Activated CD4-positive, alpha-beta memory T cell treated with anti-CD3 and anti-CD28 coated beads for 36 hours (primary cell): ENCODE measurements at regions of chr3 and their contacts with region 1.

Region 1: GRCh38 chr3:188914552-188914951 is 257.2 kb upstream of the TPRG1 start:
- DNase-seq: peak; percentile 23
- H3K4me3 Mint-ChIP-seq: no peak overlapping the region
- H3K27ac Mint-ChIP-seq: peak overlapping the region; percentile 86
- H3K4me1 Mint-ChIP-seq: peaks cover 43% of the 10 kb centered on the region
- H3K27me3 Mint-ChIP-seq: no peaks in the 10 kb centered on the region

Region 2: GRCh38 chr3:187974871-187975271 is 939.7 kb before region 1 on chr3:
- CTCF ChIA-PET with region 1: no interaction called
- POLR2A ChIA-PET with region 1: no interaction called
- intact Hi-C with region 1: loop called (anchors 2 kb)
- DNase-seq: no peak
- H3K4me3 Mint-ChIP-seq: peak overlapping the region; percentile 62
- H3K27ac Mint-ChIP-seq: peak overlapping the region; percentile 92
- H3K4me1 Mint-ChIP-seq: peaks cover 63% of the 10 kb centered on the region
- H3K27me3 Mint-ChIP-seq: no peaks in the 10 kb centered on the region

Region 3: DNA sequence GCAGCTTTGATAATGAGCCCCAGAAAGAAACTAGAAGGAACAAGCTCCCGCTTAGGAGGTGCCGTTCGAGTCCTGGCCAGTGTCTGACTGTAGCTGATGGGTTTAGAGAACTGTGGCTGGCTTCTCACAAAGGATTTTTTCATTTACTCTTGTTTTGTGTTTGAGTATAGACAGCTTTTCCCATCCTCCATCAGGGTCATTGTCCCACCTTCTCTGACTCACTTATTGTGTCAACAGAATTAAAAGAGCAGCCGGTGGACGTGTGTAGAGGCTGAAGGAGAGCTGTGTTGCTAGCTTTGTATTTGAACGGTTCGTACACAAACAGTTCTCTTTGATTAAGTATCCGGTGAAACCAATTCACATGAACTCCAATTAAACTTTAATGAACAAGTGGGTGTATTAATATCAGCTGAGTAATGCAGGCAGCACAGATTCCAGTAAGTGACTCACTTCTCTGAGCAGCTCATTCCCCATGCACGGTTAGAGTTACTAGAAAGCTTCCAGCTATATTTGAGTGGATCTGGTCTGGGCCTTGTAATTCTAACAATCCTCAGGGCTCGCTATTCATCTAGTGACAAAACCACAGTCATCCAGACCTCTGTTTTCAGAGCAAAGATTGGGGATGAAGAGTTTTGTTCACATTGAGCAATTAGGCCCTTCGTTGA is 619.6 kb before region 1 on chr3:
- CTCF ChIA-PET with region 1: no interaction called
- POLR2A ChIA-PET with region 1: interaction called, 3 read pairs
- intact Hi-C with region 1: loop called (anchors 2 kb)
- DNase-seq: no peak
- H3K4me3 Mint-ChIP-seq: no peak overlapping the region
- H3K27ac Mint-ChIP-seq: peak overlapping the region; percentile 72
- H3K4me1 Mint-ChIP-seq: peaks cover 79% of the 10 kb centered on the region
- H3K27me3 Mint-ChIP-seq: no peaks in the 10 kb centered on the region

Region 4: DNA sequence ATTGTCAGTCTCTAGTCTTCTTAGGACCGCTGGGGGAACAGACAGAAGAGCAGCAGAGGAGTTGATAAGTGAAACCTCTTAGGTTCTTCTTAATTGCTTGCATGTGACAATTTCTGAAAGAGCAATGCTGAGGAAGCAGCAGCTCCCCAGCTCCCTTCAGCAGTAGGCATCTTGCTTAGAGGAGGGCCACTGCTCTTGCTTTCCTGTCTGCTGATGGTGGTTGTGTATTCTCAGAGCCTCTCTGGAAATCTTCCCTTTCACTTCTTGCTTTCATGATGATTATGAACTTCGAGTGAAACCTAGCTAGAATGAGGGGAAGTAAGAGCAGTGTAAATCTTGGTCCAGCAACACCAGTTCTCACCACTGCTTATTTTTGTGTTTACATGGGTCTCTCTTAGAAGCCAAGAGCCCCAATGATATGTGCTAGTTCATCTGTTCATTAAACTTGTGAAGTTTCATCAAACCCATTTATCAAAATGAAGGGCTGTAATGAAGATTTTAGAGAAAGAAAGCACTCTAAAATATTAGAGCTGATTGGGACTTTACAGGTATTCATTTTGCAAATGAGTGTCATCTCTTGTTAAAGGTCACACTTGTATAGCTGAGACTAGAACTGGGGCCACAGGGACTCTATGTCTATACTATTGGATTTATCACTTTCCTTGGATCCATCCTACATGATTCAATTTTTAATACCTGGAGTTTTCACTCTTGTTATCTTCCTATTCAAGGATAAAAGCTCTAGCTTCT is 513.9 kb before region 1 on chr3:
- CTCF ChIA-PET with region 1: no interaction called
- POLR2A ChIA-PET with region 1: no interaction called
- intact Hi-C with region 1: loop called (anchors 1 kb)
- DNase-seq: peak; percentile 48
- H3K4me3 Mint-ChIP-seq: no peak overlapping the region
- H3K27ac Mint-ChIP-seq: peak overlapping the region; percentile 4
- H3K4me1 Mint-ChIP-seq: peaks cover 68% of the 10 kb centered on the region
- H3K27me3 Mint-ChIP-seq: no peaks in the 10 kb centered on the region

Region 5: DNA sequence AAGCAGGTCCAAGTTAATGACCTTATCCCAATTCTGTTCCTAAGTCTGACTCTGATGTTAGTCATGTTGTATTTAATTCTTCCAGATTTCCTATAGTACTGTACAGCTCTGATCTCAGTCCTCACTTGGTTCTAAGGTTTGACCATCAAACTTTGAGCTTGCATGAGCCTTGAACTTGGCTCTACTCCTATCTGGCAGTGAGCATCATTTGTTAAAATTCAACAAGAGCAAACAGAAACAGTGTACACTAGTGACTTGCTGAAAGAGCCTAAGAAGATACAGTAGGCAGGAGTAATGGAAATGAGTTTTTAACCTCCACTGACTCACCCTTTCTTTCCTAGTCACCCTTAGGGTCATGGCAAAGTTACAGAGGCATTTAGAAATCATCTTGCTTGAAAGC is 193.9 kb before region 1 on chr3:
- CTCF ChIA-PET with region 1: no interaction called
- POLR2A ChIA-PET with region 1: no interaction called
- intact Hi-C with region 1: loop called (anchors 1 kb)
- DNase-seq: no peak
- H3K4me3 Mint-ChIP-seq: no peak overlapping the region
- H3K27ac Mint-ChIP-seq: no peak overlapping the region
- H3K4me1 Mint-ChIP-seq: peaks cover 39% of the 10 kb centered on the region
- H3K27me3 Mint-ChIP-seq: peaks cover 12% of the 10 kb centered on the region

Region 6: DNA sequence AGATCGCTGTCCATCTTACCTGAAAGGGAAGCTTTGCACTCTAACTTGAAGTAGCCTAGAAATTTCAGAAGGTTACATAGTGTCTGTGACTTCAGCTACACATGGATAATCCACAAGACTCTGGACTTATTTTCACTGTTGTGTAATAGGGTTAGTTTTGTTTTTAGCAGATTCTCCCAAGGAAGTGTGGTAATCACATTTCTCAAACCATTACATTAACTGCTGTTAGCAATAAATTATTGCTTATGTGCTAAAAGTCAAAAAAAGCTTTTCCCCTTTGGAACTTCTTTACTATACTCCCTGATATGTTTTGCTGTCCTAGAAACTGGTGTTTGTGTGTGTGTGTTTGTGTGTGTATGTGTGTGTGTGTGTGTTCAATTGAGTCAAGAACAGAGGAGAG is 94.6 kb before region 1 on chr3:
- CTCF ChIA-PET with region 1: no interaction called
- POLR2A ChIA-PET with region 1: no interaction called
- intact Hi-C with region 1: no loop called
- DNase-seq: no peak
- H3K4me3 Mint-ChIP-seq: no peak overlapping the region
- H3K27ac Mint-ChIP-seq: no peak overlapping the region
- H3K4me1 Mint-ChIP-seq: peaks cover under 1% of the 10 kb centered on the region
- H3K27me3 Mint-ChIP-seq: no peaks in the 10 kb centered on the region

Region 7: DNA sequence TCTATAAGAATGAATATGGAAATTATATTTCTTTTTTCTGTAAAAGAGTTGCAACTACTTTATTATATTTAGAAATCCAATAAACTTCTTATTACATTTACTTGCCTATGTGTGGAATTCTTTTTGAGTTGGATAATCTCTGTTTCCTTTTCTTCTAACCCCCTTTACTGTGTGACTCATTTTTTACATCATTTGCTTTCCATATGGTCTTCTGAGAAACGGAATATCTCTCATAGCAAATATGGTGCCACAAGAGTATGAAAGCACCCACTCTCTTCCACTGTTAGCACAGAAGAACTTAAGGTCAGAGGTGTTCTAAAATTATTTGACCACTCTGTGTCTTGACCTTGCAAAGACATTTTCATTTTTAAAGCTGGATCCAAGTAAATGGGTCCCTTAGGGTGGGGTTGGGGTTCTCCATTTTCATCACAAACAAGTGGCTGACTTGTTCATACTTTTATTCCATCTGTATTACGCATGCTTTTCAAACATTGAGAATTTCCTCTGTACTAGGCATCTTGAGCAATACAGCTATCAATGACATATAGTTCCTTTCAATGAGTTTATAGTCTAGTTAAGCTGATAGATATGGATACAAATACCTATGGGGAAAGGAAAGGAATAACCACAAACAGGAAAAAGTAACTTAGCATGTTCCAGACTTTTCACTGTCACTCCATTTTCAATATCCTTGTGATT is 23.8 kb before region 1 on chr3:
- CTCF ChIA-PET with region 1: no interaction called
- POLR2A ChIA-PET with region 1: no interaction called
- intact Hi-C with region 1: no loop called
- DNase-seq: no peak
- H3K4me3 Mint-ChIP-seq: no peak overlapping the region
- H3K27ac Mint-ChIP-seq: no peak overlapping the region
- H3K4me1 Mint-ChIP-seq: peaks cover 4% of the 10 kb centered on the region
- H3K27me3 Mint-ChIP-seq: no peaks in the 10 kb centered on the region

Region 8: GRCh38 chr3:188954590-188955208 is 40.1 kb after region 1 on chr3:
- CTCF ChIA-PET with region 1: interaction called, 19 read pairs
- POLR2A ChIA-PET with region 1: interaction called, 5 read pairs
- intact Hi-C with region 1: loop called (anchors 2 kb)
- DNase-seq: peak; percentile 85
- H3K4me3 Mint-ChIP-seq: no peak overlapping the region
- H3K27ac Mint-ChIP-seq: no peak overlapping the region
- H3K4me1 Mint-ChIP-seq: peaks cover 28% of the 10 kb centered on the region
- H3K27me3 Mint-ChIP-seq: peaks cover 4% of the 10 kb centered on the region

Region 9: GRCh38 chr3:190585805-190586630 is 1671.5 kb after region 1 on chr3:
- CTCF ChIA-PET with region 1: no interaction called
- POLR2A ChIA-PET with region 1: no interaction called
- intact Hi-C with region 1: loop called (anchors 10 kb)
- DNase-seq: peak; percentile 83
- H3K4me3 Mint-ChIP-seq: peak overlapping the region; percentile 64
- H3K27ac Mint-ChIP-seq: peak overlapping the region; percentile 95
- H3K4me1 Mint-ChIP-seq: peaks cover 27% of the 10 kb centered on the region
- H3K27me3 Mint-ChIP-seq: no peaks in the 10 kb centered on the region